ENCODE measurements at regions of chr12 and their contacts with region 1.

Region 1: GRCh38 chr12:122980183-122981046 is at the start of gene ARL6IP4:
- DNase-seq: peak; percentile 75 to 90 (median 88)
- ATAC-seq: peak; percentile 80
- H3K4me3 ChIP-seq: peak within 1 kb of the TSS; percentile 88
- H3K27ac ChIP-seq: peak within 1 kb of the TSS; percentile 84
- H3K4me1 ChIP-seq: peaks cover 43 to 89% of the 10 kb centered on the region in 2 experiments
- H3K27me3 ChIP-seq: no peaks in the 10 kb centered on the region
- CTCF ChIP-seq: peak in 2 of 3 experiments; percentile 23 to 43; a peak in 1 of 6 replicates
- EP300 ChIP-seq: no peak
- POLR2A ChIP-seq: peak; percentile 75
- RAD21 ChIP-seq: peak in 1 of 2 experiments; percentile 25; a peak in 2 of 4 replicates
- polyA plus RNA-seq, gene ARL6IP4: 2.4 to 4.8 TPM

Region 2: DNA sequence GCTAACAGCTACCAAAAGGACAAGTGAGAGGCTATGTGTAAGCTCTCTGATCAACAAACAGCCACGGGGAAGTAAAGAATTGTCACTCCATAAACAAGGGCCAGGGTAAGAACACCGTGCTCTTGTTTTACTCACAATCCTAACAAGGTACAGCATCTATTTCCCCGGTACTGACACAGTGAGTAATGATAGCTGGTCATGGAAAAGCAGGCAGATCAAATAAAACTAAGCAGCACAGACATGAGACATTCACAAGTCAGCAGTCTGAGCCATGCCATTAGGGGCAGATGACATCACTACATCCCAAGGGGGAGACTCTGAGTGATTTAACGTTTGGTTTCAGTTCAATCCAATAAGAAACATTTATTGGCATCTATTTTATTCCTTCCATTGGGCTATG is 54.5 kb after region 1 on chr12:
- CTCF ChIA-PET with region 1: no interaction called
- POLR2A ChIA-PET with region 1: interaction called, 3 read pairs
- in situ Hi-C with region 1: no loop called
- intact Hi-C with region 1: loop called (anchors 5 kb)
- DNase-seq: peak in 2 of 4 experiments; percentile 26 to 27
- ATAC-seq: no peak
- H3K4me3 ChIP-seq: no peak overlapping the region
- H3K27ac ChIP-seq: peak overlapping the region; percentile 60; the same call in 1 of the 3 replicates
- H3K4me1 ChIP-seq: peaks cover 42 to 47% of the 10 kb centered on the region in 2 experiments
- H3K27me3 ChIP-seq: no peaks in the 10 kb centered on the region
- CTCF ChIP-seq: no peak
- EP300 ChIP-seq: no peak
- POLR2A ChIP-seq: no peak
- RAD21 ChIP-seq: no peak

Region 3: DNA sequence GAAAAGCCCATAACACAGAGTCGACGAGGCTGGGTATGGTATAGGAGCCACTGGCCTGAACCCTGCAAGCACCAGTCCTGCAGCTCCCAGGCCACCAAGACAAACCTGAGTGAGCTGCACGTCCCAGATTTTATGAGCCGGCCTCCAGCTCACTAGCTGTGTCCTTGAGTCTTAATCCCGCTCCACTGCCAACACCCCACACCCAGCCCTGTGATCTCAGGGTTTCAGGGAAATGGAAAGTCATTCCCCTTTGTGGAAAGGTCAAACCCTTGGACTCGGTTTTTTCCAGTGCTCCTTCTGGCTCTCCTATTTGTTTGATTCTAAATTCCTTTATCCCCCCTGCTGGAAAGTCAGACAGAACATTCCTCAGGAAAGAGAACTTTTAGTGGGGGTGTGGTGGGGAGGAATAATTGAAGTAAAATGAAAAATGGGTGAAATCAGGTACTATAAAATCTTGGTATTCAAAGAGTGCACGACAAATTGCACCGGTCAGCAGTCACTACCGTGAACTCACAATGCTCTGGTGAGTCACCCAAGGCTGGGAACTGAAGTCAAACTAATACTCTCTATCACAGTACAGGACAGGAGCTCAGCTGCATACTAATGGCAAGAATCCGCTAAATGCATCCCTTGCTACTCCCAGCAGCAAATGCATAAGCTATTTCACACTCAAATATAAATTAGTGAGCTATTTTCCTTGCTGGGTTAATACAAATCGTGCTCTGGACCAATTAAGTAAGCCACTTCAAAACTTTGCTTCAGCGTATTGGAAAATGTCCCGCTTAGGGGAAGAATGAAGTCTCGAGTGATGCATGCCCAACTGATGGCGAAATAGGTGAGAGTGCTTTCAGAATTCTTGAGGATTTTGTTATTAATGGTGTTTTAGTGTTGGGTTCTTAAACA is 161.5 kb after region 1 on chr12:
- CTCF ChIA-PET with region 1: no interaction called
- POLR2A ChIA-PET with region 1: interaction called, 3 read pairs
- in situ Hi-C with region 1: no loop called
- intact Hi-C with region 1: loop called (anchors 10 kb)
- DNase-seq: peak in 1 of 4 experiments; percentile 44
- ATAC-seq: peak; percentile 64
- H3K4me3 ChIP-seq: no peak overlapping the region
- H3K27ac ChIP-seq: no peak overlapping the region
- H3K4me1 ChIP-seq: peaks cover 11 to 35% of the 10 kb centered on the region in 2 experiments; a peak in 4 of 5 replicates
- H3K27me3 ChIP-seq: no peaks in the 10 kb centered on the region
- CTCF ChIP-seq: no peak
- EP300 ChIP-seq: no peak
- POLR2A ChIP-seq: no peak
- RAD21 ChIP-seq: no peak

Measured in K562 (cell line).